AG04449 (cell line): ENCODE measurements at regions of chr19 and their contacts with region 1.

Region 1: GRCh38 chr19:1863726-1864480 is 524 bp upstream of the KLF16 start:
- DNase-seq: peak; percentile 42
- H3K4me3 ChIP-seq: peak overlapping the region; percentile 73
- CTCF ChIP-seq: no peak

Region 2: GRCh38 chr19:1734321-1734966 is 129.5 kb before region 1 on chr19:
- CTCF ChIA-PET with region 1: no interaction called
- POLR2A ChIA-PET with region 1: no interaction called
- DNase-seq: no peak
- H3K4me3 ChIP-seq: no peak overlapping the region
- CTCF ChIP-seq: no peak

Region 3: DNA sequence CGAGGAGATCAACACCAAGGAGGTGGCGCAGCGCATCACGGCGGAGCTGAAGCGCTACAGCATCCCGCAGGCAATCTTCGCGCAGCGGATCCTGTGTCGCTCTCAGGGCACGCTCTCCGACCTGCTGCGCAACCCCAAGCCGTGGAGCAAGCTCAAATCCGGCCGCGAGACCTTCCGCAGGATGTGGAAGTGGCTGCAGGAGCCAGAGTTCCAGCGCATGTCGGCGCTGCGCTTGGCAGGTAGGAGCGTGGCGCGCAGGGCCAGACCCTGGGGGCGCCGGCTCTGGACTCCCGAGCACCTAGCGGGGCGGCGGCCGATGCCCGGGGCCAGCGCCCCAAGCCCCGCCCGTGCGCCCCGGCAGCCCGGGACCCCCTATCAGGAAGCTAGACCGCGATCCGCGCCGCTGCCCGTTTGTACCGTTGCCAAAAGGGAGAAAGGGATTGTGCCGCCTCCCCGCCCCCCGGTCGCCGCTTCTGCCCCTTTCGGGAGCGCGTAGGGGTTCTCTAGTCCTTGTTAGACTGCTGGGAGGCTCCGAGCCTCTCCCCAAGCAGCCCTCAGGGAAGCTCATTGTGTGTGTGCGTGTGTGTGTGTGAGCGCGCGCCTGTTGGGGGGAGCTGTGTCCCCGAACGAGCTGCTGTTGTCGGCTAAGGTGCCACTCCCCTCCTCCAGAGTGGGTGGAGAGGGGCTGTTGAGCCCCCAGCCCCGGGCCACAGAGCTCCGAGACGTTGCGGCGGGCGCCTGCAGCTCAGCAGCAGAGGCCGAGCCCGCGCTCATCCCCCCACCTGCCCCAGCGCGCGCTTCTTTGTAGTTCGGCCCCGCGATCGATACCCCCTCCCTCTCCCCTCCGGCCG is 109.1 kb before region 1 on chr19:
- CTCF ChIA-PET with region 1: no interaction called
- POLR2A ChIA-PET with region 1: no interaction called
- DNase-seq: no peak
- H3K4me3 ChIP-seq: no peak overlapping the region
- CTCF ChIP-seq: no peak

Region 4: GRCh38 chr19:1875646-1876495 is 12.0 kb after region 1 on chr19:
- CTCF ChIA-PET with region 1: interaction called, 16 read pairs
- POLR2A ChIA-PET with region 1: interaction called, 8 read pairs
- DNase-seq: no peak
- H3K4me3 ChIP-seq: peak overlapping the region; percentile 98
- CTCF ChIP-seq: no peak